Panc1 (cell line): ENCODE measurements at regions of chr5 and their contacts with region 1.

Region 1: DNA sequence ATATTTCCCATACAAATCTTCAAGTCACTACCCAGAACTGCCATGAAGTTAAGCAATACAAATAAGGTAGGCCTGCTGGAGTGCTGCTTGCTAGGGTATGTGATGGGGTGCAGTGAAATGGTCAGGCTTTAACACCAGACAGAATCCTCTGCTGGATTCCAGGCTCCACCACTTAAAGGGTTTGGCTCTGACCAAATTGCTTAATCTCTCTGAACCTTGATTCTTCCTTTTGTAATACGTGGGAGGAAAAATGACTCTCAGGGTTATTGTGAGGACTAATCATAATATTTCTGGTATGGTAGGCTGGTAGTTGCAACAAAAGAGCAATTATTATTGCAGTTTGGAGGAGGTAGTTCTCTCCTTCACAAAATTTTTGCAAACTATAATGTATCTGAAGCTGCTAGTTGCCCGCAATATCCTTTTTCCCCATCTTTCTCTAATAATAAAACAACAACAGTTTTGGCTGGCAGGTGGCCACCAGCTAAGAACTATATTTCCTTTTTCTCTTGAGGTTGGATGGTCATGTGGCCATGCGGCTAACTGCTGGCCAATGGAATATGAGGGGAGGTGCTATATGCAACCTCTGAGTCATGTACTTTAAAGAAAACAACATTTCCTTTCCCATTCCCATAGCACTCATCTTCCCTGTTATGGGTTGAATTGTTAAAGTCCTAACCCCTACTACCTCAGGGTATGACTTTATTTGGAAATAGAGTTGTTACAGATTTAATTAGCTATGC is 44.1 kb downstream of the CCL28 start:
- DNase-seq: no peak
- ATAC-seq: no peak
- H3K4me3 ChIP-seq: no peak overlapping the region
- H3K27ac ChIP-seq: no peak overlapping the region
- H3K4me1 ChIP-seq: no peaks in the 10 kb centered on the region
- H3K27me3 ChIP-seq: peaks cover 2% of the 10 kb centered on the region; the same call in 1 of the 2 replicates
- CTCF ChIP-seq: no peak

Region 2: DNA sequence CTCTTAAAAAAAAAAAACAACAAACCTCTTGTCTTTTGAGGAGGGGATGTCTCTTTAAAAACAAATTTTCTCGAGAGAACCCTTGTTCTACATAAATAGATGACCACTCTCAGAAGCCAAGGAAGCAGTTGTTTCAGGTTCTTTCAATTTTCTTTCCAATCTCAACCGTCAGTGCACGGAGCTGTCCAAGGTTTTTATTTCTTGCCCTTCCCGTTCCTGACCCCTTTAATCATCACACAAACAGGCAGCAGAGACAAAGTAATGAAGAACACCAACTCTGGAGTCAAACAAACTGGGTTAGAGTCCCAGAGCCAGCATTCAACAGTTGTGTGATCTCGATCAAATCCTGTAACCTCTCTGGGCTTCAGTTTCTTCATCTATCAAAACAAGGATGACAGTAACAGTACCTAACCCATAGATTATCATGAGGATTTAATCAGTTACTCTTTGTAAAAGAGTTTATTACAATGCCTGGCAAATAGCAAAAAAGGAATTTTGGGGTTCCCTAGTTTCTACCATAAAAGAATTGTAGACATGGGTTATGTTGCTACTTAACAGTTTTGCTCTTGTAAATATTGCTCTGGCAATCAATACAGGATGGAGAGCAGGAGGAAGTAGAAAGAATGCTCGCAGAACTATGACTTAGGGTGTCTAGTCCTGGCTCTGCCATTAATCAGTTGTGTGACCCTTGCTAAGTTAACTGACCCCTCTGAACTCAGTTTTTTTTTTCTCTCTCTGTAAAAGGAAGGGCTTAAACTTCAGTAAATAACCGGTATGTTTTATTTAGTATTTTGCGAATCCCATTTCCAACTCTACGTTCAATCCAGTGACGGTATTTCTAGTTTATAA is 177.1 kb before region 1 on chr5:
- CTCF ChIA-PET with region 1: no interaction called
- POLR2A ChIA-PET with region 1: interaction called, 10 read pairs
- in situ Hi-C with region 1: no loop called
- intact Hi-C with region 1: no loop called
- DNase-seq: no peak
- ATAC-seq: no peak
- H3K4me3 ChIP-seq: peak overlapping the region; percentile 51 to 61; a peak in 2 of 4 replicates
- H3K27ac ChIP-seq: no peak overlapping the region
- H3K4me1 ChIP-seq: peaks cover 14% of the 10 kb centered on the region
- H3K27me3 ChIP-seq: peaks cover 7% of the 10 kb centered on the region; the same call in 1 of the 2 replicates
- CTCF ChIP-seq: no peak